Left cardiac atrium (tissue), 4 donors: ENCODE measurements at regions of chr15 and their contacts with region 1.

Region 1: GRCh38 chr15:90618330-90619125 is 88.8 kb downstream of the CRTC3 start:
- DNase-seq: no peak
- ATAC-seq: peak in 1 of 2 donors; percentile 17

Region 2: DNA sequence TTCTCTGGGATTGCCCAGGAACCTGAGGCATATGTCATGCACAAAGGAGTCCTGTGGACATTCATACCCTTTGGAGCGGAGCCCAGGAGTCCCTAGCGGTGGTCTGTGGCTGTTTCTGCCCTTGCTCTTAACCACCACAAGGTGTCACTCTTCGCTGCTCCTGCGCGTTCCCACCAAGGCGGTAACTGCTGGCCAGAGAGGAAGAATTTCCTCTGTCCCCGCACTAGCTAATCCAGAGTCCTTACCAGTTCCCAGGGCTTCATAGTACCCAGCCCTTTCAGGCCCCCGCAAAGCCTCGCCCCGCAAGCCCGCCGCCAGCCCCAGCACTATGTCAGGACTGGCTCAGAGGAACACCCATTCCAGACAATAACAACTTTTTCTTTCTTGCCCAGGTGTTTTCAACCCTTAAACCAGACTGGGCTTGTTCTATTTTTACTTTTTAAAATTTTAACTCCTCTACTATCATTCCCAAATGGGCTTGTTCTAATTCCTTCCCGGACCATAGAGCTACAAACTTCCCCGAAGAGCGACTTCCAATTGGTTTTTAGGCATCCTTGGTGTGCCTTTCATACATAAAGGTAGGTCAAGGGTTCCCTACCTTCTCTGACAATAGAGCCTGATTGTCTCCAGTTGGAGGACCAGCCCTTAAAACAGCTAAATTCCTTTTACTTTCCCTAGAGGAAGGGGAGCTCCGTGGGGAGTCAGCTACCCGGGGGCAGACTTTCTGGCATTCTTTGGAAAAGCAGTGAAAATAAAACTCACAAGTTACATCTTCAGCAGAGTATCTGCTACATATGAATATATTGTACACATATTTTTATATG is 298.3 kb before region 1 on chr15:
- intact Hi-C with region 1: loop called in 1 of 2 experiments (anchors 10 kb)
- DNase-seq: peak; percentile 87
- ATAC-seq: peak; percentile 85 to 89

Region 3: GRCh38 chr15:90539789-90540188 is 78.7 kb before region 1 on chr15:
- intact Hi-C with region 1: loop called in 1 of 2 experiments (anchors 5 kb)
- DNase-seq: no peak
- ATAC-seq: no peak

Region 4: GRCh38 chr15:90742087-90742486 is 123.6 kb after region 1 on chr15:
- intact Hi-C with region 1: no loop called
- DNase-seq: no peak
- ATAC-seq: no peak